GM12878 (cell line): ENCODE measurements at regions of chr2 and their contacts with region 1.

Region 1: DNA sequence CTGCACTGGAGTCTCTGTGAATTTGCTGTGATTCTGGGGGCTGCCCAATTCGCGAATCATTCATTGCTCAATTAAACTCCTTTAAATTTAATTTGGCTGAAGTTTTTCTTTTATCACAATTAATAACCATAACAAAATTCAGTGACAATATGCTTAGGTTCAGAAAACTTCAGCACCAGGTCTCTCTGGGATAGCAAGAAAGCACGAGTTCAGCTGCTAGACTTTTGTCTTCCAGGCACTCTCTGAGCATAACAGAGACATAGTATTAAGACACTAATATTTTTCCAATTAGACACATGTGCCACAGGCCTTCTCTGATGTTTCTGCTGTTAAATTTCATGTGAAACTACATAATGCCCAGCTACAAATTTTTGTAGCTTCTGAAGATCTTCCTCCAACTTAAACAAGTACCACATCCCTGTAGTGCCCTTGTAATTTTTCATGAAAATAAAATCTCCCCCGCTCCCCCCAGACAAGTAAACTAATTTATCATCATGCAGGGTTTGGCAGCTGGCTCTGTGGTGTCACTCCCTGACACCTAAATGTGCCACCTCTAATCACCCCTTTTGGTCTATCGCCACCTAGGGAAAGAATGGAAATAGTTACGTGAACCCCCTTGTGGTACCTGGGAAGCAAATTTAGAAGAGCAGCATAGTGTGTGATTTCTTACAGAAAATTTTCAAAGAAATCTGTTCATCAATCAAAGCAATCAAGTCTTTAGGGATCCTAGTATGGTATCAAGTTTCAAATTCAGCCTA is 94.1 kb downstream of the CSRNP3 start:
- DNase-seq: no peak
- ATAC-seq: peak; percentile 81
- H3K4me3 ChIP-seq: no peak overlapping the region
- H3K27ac ChIP-seq: no peak overlapping the region
- H3K4me1 ChIP-seq: no peaks in the 10 kb centered on the region
- H3K27me3 ChIP-seq: no peaks in the 10 kb centered on the region
- CTCF ChIP-seq: peak; percentile 11 to 47 (median 43); a peak in 3 of 6 replicates
- EP300 ChIP-seq: no peak
- POLR2A ChIP-seq: no peak
- RAD21 ChIP-seq: no peak

Region 2: DNA sequence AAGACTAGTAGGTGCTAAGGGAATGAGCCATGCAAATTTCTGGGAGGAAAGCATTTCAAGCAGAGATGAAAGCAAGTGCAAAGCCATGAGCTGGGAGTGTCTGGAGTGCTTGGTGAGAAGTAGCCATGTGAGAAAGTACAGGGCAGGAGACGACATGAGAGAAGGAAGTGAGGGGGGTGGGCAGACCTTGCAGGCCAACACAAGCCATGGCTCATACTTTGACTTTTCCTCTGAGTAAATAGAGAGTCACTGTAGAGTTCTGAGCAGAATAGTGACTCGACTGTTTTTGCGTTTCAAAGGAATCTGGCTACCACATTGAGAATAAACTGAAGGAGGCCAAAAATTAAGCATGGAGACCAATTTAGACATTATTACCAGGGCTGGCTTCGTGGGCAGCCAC is 282.3 kb before region 1 on chr2:
- CTCF ChIA-PET with region 1: no interaction called
- POLR2A ChIA-PET with region 1: no interaction called
- RAD21 ChIA-PET with region 1: no interaction called
- SMC1A ChIA-PET with region 1: no interaction called
- in situ Hi-C with region 1: no loop called
- intact Hi-C with region 1: no loop called
- DNase-seq: no peak
- ATAC-seq: no peak
- H3K4me3 ChIP-seq: no peak overlapping the region
- H3K27ac ChIP-seq: no peak overlapping the region
- H3K4me1 ChIP-seq: no peaks in the 10 kb centered on the region
- H3K27me3 ChIP-seq: no peaks in the 10 kb centered on the region
- CTCF ChIP-seq: no peak
- EP300 ChIP-seq: no peak
- POLR2A ChIP-seq: no peak
- RAD21 ChIP-seq: no peak

Region 3: GRCh38 chr2:165401285-165401852 is 162.3 kb before region 1 on chr2:
- CTCF ChIA-PET with region 1: interaction called, 35 read pairs
- POLR2A ChIA-PET with region 1: no interaction called
- RAD21 ChIA-PET with region 1: interaction called, 24 read pairs
- SMC1A ChIA-PET with region 1: interaction called, 58 read pairs
- in situ Hi-C with region 1: no loop called
- intact Hi-C with region 1: loop called (anchors 1 kb)
- DNase-seq: peak; percentile 9
- ATAC-seq: peak; percentile 77
- H3K4me3 ChIP-seq: no peak overlapping the region
- H3K27ac ChIP-seq: no peak overlapping the region
- H3K4me1 ChIP-seq: no peaks in the 10 kb centered on the region
- H3K27me3 ChIP-seq: no peaks in the 10 kb centered on the region
- CTCF ChIP-seq: peak; percentile 54 to 69 (median 66); a peak in 5 of 6 replicates
- EP300 ChIP-seq: no peak
- POLR2A ChIP-seq: no peak
- RAD21 ChIP-seq: peak; percentile 81

Region 4: DNA sequence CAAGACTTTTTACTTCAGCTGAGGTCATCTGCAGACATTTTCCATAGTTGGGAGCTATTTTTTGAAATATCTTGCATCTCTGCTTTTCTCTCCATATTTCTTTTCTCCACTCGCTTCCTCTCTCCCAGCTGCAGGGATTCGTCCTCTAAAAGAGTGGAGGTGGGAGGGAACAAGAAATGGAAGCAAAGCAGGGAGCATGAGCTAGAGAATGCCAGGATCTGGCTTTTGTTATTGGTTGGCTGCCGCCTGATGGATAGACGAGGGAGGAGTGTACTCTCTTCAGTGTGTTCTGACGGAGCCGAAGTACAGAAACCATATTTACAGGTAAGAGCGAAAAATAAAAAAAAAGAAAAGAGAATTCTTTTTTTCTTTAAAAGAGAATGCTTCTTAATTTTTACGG is 94.2 kb before region 1 on chr2 and contains the start of gene CSRNP3:
- CTCF ChIA-PET with region 1: interaction called, 4 read pairs
- POLR2A ChIA-PET with region 1: no interaction called
- RAD21 ChIA-PET with region 1: interaction called, 4 read pairs
- SMC1A ChIA-PET with region 1: interaction called, 15 read pairs
- in situ Hi-C with region 1: no loop called
- intact Hi-C with region 1: no loop called
- DNase-seq: no peak
- ATAC-seq: peak; percentile 45; the same call in 2 of the 3 replicates
- H3K4me3 ChIP-seq: no peak within 1 kb of the TSS
- H3K27ac ChIP-seq: no peak within 1 kb of the TSS
- H3K4me1 ChIP-seq: no peaks in the 10 kb centered on the region
- H3K27me3 ChIP-seq: no peaks in the 10 kb centered on the region
- CTCF ChIP-seq: no peak
- EP300 ChIP-seq: no peak
- POLR2A ChIP-seq: no peak
- RAD21 ChIP-seq: no peak
- polyA plus RNA-seq, gene CSRNP3: 0.11 TPM in 1 of 2 experiments, not detected in the other

Region 5: GRCh38 chr2:165573534-165574461 is 10.2 kb after region 1 on chr2:
- CTCF ChIA-PET with region 1: interaction called, 10 read pairs
- POLR2A ChIA-PET with region 1: interaction called, 6 read pairs
- RAD21 ChIA-PET with region 1: interaction called, 21 read pairs
- SMC1A ChIA-PET with region 1: interaction called, 75 read pairs
- in situ Hi-C with region 1: no loop called
- intact Hi-C with region 1: no loop called
- DNase-seq: no peak
- ATAC-seq: peak; percentile 66
- H3K4me3 ChIP-seq: no peak overlapping the region
- H3K27ac ChIP-seq: no peak overlapping the region
- H3K4me1 ChIP-seq: no peaks in the 10 kb centered on the region
- H3K27me3 ChIP-seq: no peaks in the 10 kb centered on the region
- CTCF ChIP-seq: no peak
- EP300 ChIP-seq: no peak
- POLR2A ChIP-seq: no peak
- RAD21 ChIP-seq: no peak

Region 6: GRCh38 chr2:165660361-165660760 is 96.7 kb after region 1 on chr2:
- CTCF ChIA-PET with region 1: interaction called, 3 read pairs
- POLR2A ChIA-PET with region 1: no interaction called
- RAD21 ChIA-PET with region 1: interaction called, 13 read pairs
- SMC1A ChIA-PET with region 1: interaction called, 3 read pairs
- in situ Hi-C with region 1: no loop called
- intact Hi-C with region 1: no loop called
- DNase-seq: no peak
- ATAC-seq: peak; percentile 88
- H3K4me3 ChIP-seq: no peak overlapping the region
- H3K27ac ChIP-seq: no peak overlapping the region
- H3K4me1 ChIP-seq: no peaks in the 10 kb centered on the region
- H3K27me3 ChIP-seq: no peaks in the 10 kb centered on the region
- CTCF ChIP-seq: no peak
- EP300 ChIP-seq: no peak
- POLR2A ChIP-seq: no peak
- RAD21 ChIP-seq: no peak

Region 7: GRCh38 chr2:165725421-165725820 is 161.8 kb after region 1 on chr2:
- CTCF ChIA-PET with region 1: no interaction called
- POLR2A ChIA-PET with region 1: no interaction called
- RAD21 ChIA-PET with region 1: no interaction called
- SMC1A ChIA-PET with region 1: no interaction called
- in situ Hi-C with region 1: no loop called
- intact Hi-C with region 1: no loop called
- DNase-seq: no peak
- ATAC-seq: no peak
- H3K4me3 ChIP-seq: no peak overlapping the region
- H3K27ac ChIP-seq: no peak overlapping the region
- H3K4me1 ChIP-seq: no peaks in the 10 kb centered on the region
- H3K27me3 ChIP-seq: no peaks in the 10 kb centered on the region
- CTCF ChIP-seq: no peak
- EP300 ChIP-seq: no peak
- POLR2A ChIP-seq: no peak
- RAD21 ChIP-seq: no peak

Region 8: DNA sequence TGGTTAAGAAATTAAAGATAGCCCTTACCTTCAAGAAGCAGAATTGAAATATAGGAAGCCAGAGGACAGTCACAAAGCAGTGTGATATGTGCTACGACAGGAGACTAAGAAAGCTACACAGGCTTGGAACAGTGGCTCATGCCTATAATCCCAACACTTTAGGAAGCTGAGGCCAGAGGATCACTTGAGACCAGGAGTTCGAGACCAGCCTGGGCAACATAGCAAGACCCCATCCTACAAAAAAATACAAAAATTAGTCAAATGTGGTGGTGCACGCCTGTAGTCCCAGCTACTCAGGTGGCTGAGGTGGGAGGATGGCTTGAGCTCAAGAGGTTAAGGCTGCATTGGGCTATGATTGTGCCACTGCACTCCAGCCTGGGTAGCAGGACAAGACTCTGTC is 208.5 kb after region 1 on chr2:
- CTCF ChIA-PET with region 1: interaction called, 3 read pairs
- POLR2A ChIA-PET with region 1: no interaction called
- RAD21 ChIA-PET with region 1: no interaction called
- SMC1A ChIA-PET with region 1: no interaction called
- in situ Hi-C with region 1: no loop called
- intact Hi-C with region 1: loop called (anchors 5 kb)
- DNase-seq: no peak
- ATAC-seq: no peak
- H3K4me3 ChIP-seq: no peak overlapping the region
- H3K27ac ChIP-seq: no peak overlapping the region
- H3K4me1 ChIP-seq: no peaks in the 10 kb centered on the region
- H3K27me3 ChIP-seq: no peaks in the 10 kb centered on the region
- CTCF ChIP-seq: no peak
- EP300 ChIP-seq: no peak
- POLR2A ChIP-seq: no peak
- RAD21 ChIP-seq: no peak